ENCODE measurements at regions of chr2 and their contacts with region 1.

Region 1: DNA sequence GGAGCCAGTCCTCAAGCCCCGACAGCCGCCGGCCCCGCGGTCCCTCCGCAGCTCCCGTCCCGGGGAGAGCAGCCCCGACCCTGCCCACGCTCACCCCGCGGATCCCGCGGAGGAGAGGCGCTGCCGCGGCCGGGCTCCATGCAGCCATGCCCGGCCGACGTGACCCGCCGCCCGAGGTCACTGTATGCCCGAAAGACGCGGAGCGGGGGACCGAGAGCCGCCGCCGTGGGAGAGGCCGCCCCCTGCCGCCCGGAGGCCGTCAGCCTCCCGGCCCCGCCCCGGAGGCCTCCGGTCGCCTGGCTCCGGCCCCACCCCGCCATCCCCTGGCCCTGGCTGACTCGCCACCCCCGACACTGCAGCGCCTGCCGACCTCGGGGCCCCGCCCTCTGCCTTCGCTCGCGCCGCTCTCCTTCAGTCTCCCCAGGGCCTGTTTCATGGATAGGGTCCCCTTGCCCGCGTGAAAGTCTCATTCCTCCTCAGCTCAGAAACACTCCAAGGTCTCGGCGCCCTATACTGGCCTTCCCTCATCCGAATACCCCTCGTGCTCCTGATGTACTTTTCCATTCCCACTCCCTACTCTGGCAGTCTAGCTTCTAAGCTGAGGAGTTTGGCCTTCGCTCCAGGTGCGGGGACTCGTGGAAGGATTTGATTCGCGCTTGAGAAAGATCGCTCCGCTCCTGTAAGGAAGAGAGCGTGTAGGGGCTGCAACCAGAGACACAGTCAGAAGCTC is at the start of gene BOLA3:
- DNase-seq: peak; percentile 95
- total RNA-seq, gene BOLA3: 69.5 TPM

Region 2: DNA sequence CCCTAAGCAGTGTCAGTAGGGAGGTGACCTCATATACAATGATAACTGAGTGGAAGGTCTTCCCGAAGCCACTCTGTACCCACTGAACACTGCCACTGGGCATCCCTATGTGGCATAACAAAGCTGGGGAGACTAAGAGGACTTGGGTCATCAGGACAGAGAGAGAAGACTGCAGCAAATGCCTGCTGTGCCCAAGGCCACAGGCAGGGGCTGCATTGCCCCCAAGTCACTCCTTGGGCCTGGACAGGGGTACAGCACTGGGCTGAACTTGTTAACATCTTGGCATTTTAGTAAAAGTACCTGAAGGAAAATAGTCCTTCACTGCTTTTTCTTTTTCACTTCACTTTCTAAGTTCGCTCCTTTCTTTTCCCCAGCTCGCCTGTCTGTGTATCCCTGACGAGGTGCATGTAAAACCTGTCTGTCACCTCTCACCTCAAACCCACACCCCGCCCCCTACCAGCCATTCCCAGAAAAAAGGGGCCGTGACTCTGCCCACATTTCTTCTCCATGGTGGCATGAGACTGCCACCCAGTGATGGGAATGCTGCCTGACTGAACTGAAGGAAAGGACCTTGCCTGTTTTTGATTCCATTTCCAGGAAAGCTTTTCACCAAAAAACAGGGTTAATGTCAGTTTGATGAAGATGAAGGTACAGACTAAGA is 113.4 kb after region 1 on chr2:
- intact Hi-C with region 1: loop called (anchors 10 kb)
- DNase-seq: no peak

Region 3: DNA sequence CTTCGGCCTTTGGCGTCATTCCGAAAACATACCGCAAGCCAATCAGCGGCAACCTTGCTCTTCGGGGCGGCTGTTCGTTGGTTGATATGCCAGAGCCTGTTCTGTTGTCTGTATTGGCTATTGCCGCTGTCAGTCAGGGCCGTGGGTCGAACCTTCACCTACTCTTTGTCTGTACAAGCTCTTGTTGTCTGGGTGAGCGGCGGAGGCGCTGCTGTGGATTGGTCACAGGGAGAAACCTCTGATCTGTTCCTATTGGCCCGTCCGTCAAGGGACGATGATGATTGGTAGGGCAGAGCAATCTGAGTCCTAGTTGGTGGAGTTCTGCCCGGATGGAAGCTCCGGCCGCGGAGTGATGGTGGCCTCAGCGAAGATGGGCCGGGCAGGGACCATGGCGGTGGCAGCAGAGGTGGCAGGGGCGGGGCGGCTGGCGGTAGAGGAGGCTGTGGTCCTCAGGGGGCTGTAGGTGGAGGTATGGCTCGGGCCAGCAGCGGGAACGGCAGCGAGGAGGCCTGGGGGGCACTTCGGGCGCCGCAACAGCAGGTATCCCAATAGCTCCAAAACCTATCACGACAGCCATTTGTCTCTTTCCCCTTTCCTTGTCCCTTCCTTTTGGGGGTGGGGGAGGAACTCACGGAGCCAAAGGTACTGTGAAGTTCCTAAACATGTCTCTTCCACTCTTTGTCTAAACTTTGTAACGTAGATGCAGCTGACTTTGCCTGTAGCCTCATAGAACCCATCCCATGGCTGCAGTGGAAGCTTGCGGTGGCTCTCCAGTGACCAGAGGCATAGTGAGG is 310.4 kb after region 1 on chr2 and contains the start of gene WBP1:
- intact Hi-C with region 1: no loop called
- DNase-seq: peak; percentile 100
- total RNA-seq, gene WBP1: 47.7 TPM

Region 4: GRCh38 chr2:75666911-75667310 is 1519.0 kb after region 1 on chr2:
- intact Hi-C with region 1: no loop called
- DNase-seq: no peak

Measured in cardiac septum (tissue), 1 donor.